ENCODE measurements at regions of chr15 and their contacts with region 1.

Region 1: GRCh38 chr15:52719684-52720083 is 40.5 kb upstream of the ATOSA start:
- DNase-seq: no peak
- ATAC-seq: no peak
- H3K4me3 Mint-ChIP-seq: no peak overlapping the region
- H3K27ac Mint-ChIP-seq: no peak overlapping the region
- H3K4me1 Mint-ChIP-seq: peaks cover 8% of the 10 kb centered on the region
- H3K27me3 Mint-ChIP-seq: no peaks in the 10 kb centered on the region
- CTCF ChIP-seq: no peak

Region 2: DNA sequence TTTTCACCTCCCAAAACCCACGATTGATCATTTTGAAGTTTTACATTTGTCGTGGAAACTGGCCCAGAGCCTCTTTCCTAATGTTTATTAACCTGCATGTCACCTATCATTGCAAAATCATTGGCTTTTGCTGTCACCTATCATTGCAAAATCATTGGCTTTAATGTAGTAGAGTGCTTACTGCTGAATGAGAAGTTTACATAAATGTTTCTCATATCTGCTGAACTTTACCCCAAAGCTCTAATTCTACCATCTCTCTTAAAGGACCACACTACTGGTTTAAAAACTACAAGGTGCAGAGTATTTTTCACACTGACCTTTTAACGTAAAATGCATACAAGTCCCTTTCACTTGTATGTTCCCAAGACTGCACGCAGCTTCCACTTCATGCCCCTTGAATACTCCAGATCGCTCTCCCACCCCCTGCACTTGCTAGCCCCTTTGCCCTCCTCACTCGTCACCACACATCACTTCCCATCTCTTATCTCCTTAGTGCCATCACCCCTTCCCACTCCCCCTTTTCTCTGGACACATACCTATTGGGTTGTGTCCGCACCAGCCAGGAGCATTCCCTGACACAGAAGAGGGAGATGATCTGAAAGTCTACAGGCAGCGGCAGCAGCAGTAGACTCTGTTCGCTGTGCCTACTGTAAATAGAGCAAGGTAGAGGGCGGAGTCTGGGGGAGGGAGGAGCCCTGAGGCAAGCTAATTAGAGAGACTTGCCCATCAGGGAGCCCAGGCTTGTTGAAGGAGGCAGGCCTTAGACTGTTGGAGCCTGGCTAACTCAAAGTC is 10.3 kb before region 1 on chr15:
- CTCF ChIA-PET with region 1: no interaction called
- POLR2A ChIA-PET with region 1: no interaction called
- intact Hi-C with region 1: loop called (anchors 1 kb)
- DNase-seq: peak; percentile 47
- ATAC-seq: peak; percentile 99
- H3K4me3 Mint-ChIP-seq: peak overlapping the region; percentile 88
- H3K27ac Mint-ChIP-seq: peak overlapping the region; percentile 91
- H3K4me1 Mint-ChIP-seq: peaks cover 53% of the 10 kb centered on the region
- H3K27me3 Mint-ChIP-seq: no peaks in the 10 kb centered on the region
- CTCF ChIP-seq: no peak